ENCODE measurements at regions of chr10 and their contacts with region 1.

Region 1: GRCh38 chr10:59580026-59580863 is 129.4 kb downstream of the SLC16A9 start:
- DNase-seq: no peak

Region 2: DNA sequence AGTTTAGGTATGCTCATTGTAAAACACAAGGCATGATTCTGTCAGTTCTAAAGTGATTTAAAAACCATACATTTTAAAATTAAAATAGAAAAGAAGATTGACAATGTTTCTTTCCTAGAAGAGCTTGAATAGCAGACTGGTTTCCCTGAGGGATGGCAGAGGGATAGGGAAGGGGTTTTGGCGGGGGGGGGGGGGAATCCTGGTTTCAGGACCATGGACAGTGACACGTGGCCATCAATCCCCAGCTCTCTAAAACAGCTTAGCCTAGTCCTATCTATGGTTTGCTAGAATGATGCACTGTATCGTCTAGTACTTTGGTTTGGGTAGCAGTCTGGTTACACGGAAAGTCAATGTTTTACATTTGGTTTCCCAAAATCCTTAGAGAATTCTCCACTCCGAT is 315.1 kb before region 1 on chr10:
- in situ Hi-C with region 1: loop called (anchors 25 kb)
- DNase-seq: no peak